ENCODE measurements at regions of chr9 and their contacts with region 1.

Region 1: DNA sequence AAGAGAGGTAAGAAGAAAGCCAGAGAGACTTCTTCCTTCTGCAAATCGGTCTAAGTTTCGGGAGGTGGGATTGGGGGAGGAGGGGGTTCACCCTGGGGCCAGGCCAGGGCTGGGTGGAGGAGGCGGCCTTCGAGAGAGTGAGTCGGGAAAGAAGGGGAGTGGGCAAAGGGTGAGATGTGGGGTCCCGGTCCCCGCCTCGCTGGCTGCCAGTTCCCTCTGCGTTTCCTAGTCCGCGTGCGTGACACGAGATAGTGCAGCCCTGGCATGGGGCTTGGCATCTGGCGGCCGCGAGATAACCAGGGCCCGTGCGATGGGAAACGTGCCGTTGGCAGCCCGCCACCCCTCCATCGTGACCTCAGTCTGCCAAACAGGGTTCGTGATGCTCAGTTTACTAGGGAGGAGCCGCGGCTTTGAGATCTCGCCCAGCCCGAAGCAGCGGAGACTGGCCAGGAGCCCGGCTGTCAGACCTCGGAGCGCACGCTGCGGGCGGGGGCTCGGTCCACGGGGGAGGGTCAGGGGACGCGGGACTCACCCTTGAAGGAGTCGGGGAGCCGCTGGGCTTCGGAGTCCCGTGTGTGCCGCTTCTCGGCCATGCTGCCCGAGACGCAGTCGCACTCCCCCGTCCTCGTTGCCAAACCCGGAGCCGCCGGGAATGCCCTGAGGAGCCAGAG is at the start of gene STOM:
- DNase-seq: no peak
- H3K4me3 Mint-ChIP-seq: peak within 1 kb of the TSS; percentile 84
- H3K27ac Mint-ChIP-seq: peak within 1 kb of the TSS; percentile 92
- H3K4me1 Mint-ChIP-seq: peaks cover 43% of the 10 kb centered on the region
- H3K27me3 Mint-ChIP-seq: no peaks in the 10 kb centered on the region
- total RNA-seq, gene STOM: 48.3 and 50.3 TPM in 2 replicates

Region 2: GRCh38 chr9:121353241-121354061 is 16.3 kb before region 1 on chr9:
- intact Hi-C with region 1: loop called (anchors 1 kb)
- DNase-seq: peak; percentile 89
- H3K4me3 Mint-ChIP-seq: peak overlapping the region; percentile 69
- H3K27ac Mint-ChIP-seq: peak overlapping the region; percentile 89
- H3K4me1 Mint-ChIP-seq: peaks cover 50% of the 10 kb centered on the region
- H3K27me3 Mint-ChIP-seq: no peaks in the 10 kb centered on the region

Region 3: GRCh38 chr9:121359351-121360294 is 10.1 kb before region 1 on chr9:
- intact Hi-C with region 1: loop called (anchors 1 kb)
- DNase-seq: no peak
- H3K4me3 Mint-ChIP-seq: peak overlapping the region; percentile 61
- H3K27ac Mint-ChIP-seq: peak overlapping the region; percentile 71
- H3K4me1 Mint-ChIP-seq: peaks cover 49% of the 10 kb centered on the region
- H3K27me3 Mint-ChIP-seq: no peaks in the 10 kb centered on the region

Region 4: DNA sequence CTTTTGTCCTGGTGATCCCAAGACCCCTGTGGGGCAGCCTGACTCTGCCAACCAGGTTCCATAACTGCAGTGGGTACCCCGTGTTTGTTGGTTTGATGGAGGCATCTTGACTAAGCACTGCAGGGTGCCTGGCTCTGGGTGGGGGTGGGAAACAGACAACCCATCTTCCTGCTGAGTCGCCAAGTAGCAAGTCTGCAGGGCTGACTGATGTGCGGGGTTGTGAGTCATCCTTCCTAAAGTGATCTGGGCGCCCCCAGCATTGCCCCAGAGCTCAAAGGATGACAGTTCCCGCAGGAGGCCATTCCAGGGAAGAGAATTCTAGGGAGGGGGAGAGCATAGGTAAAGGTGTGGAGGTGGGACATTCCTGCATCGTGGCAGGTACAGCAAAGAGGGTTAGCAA is 305.2 kb after region 1 on chr9:
- intact Hi-C with region 1: no loop called
- DNase-seq: no peak
- H3K4me3 Mint-ChIP-seq: no peak overlapping the region
- H3K27ac Mint-ChIP-seq: no peak overlapping the region
- H3K4me1 Mint-ChIP-seq: no peaks in the 10 kb centered on the region
- H3K27me3 Mint-ChIP-seq: peaks cover 2% of the 10 kb centered on the region

Region 5: DNA sequence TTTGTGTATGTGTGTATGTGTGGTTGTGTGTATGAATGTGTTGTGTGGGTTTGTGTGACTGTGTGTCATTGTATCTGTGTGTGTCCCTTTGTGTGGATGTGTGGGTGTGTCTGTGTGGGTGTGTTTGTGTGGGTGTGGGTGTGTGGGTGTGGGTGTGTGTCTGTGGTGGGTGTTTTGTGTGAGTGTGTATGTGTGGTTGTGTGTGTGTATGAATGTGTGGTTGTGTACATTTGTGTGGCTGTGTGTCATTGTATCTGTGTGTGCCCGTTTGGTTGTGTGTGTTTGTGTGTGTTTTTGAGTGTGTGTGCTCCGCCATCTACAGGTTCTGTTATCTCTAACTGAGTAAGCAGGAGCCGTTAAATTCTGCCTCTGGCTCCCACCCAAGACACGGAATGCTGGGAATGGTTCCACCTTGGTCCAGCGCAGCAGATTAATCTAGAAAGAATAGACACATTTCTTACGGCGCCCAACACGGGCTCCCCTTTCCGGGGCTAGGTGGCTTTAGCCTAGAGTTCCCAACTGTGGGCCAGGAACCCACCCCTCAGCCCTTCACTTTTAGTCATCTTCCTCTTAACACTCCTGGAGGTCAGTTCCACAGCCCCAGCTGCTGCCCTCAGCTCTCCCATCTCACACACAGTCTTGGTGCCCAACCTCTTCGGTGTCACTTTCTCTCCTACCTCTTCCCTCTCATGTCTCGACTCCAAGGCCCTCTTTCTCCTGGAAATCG is 526.3 kb after region 1 on chr9:
- intact Hi-C with region 1: no loop called
- DNase-seq: no peak
- H3K4me3 Mint-ChIP-seq: no peak overlapping the region
- H3K27ac Mint-ChIP-seq: no peak overlapping the region
- H3K4me1 Mint-ChIP-seq: no peaks in the 10 kb centered on the region
- H3K27me3 Mint-ChIP-seq: no peaks in the 10 kb centered on the region

Measured in activated CD4-positive, alpha-beta T cell treated with anti-CD3 and anti-CD28 coated beads, Interleukin-2, amount 10 ng/mL, durations not matched to agents 24 days and 14 days (primary cell).